ENCODE measurements at regions of chr14 and their contacts with region 1.

Region 1: DNA sequence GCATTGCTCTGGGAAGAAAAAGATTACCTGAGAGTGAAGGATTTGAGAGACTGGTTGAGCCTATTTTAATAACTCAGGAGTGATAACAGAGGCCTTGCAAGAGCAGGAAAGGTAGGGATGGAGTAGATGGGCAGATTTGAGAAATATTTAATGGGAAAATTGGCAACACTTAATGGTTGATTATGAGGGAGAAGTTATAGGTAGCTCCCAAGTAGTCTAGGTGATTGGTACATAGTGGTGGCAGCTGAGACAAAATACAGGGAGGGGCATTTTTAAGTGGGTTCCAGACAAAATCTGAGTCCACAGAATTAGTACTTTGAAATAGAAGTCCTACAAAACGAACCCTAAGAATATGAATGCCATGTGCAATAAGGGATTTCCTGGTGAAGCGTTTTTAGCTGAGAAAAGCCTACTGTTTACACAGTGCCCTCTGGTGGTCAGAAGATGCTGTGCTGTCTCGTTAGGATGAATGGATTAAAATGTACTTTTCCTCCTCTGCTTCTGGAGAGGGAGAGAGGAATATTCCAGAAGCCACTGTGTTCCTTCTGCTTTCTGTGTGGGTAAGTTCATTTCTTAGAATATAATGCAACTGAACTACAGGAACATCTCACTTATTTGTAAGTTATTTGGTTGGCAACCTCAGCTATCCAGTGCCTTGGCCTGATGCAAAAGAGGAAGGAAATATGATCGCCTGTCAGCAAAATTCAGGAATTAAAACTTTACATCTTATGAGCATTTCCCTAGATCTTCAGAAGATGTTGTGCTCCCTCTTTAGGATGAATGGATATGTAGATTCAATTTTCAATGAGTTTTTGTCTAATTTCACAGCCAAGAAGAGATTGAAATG is 6.5 kb downstream of the ZBTB1 start:
- DNase-seq: peak in 32 of 35 experiments; percentile 29 to 88 (median 56)
- ATAC-seq: peak; percentile 58 to 69 (median 64)
- H3K4me3 ChIP-seq: no peak overlapping the region
- H3K4me3 Mint-ChIP-seq: peak overlapping the region; percentile 15 to 49 (median 49)
- H3K27ac ChIP-seq: peak overlapping the region; percentile 15
- H3K27ac Mint-ChIP-seq: peak overlapping the region; percentile 80
- H3K4me1 ChIP-seq: peaks cover 49 to 51% of the 10 kb centered on the region in 2 experiments
- H3K4me1 Mint-ChIP-seq: peaks cover 88 to 92% (median 90%) of the 10 kb centered on the region in 3 donors
- H3K27me3 ChIP-seq: no peaks in the 10 kb centered on the region
- H3K27me3 Mint-ChIP-seq: no peaks in the 10 kb centered on the region

Region 2: DNA sequence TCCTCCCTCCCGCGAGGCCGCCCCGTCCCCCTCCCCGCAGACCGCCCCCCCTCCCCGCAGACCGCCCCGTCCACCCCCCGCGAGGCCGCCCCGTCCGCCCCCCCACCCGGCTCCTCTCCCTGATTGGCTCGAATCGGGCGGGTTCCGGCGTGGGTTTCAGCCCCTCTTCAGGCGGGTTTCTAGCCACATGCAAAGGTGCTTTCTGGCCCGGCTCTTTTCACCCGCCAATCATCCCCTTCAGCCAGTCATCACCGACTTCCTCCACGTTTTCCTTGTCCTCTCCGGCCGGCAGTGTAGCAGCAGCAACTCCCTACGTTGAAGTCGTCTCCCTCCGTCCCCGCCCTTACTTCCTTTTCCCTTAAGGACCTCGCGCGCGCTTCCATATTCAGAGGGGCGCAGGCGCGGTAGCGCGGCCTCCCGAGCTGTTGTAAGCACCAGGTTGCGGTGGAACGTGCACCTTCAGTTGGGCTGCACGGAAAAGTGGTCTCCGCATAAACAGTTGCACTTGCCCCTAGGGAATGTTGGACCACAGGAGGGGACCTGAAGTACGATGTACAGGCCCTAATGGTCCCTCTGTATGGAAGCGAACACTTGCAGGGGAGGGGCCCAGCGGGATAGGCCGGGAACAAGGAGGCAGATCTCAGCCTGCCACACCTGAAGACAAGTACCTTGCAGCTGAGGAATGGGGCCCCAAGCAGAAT is 172.3 kb before region 1 on chr14:
- CTCF ChIA-PET with region 1: interaction called in 1 of 2 experiments, 14 read pairs
- POLR2A ChIA-PET with region 1: interaction called in 1 of 2 experiments, 4 read pairs
- DNase-seq: peak; percentile 59 to 88 (median 75)
- ATAC-seq: peak; percentile 87 to 89 (median 88)
- H3K4me3 ChIP-seq: peak overlapping the region; percentile 66 to 83
- H3K4me3 Mint-ChIP-seq: peak overlapping the region; percentile 90
- H3K27ac ChIP-seq: peak overlapping the region; percentile 65
- H3K27ac Mint-ChIP-seq: peak overlapping the region; percentile 74 to 88
- H3K4me1 ChIP-seq: peaks cover 6 to 13% of the 10 kb centered on the region in 2 experiments
- H3K4me1 Mint-ChIP-seq: peaks cover 15 to 31% (median 20%) of the 10 kb centered on the region in 3 donors
- H3K27me3 ChIP-seq: no peaks in the 10 kb centered on the region
- H3K27me3 Mint-ChIP-seq: no peaks in the 10 kb centered on the region

Region 3: DNA sequence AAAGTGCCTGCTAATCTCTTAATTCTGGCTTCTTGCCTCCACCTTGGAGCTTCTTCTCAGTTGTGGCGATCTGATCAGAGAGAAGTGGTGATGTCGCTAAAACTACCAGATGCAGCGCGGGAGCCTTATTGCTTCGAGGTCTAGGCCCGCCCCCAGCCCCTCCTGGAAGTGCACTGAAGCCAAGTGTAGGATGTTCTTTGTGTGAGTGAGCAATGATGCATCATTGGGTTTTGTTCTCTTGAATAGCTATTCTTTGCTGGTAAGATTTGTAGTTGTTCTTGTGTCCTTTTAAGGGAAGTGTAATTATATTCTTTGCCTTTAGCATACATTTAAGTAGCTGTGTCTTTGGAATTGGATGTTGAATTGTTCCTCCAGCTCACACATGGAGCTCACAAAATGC is 87.1 kb before region 1 on chr14:
- CTCF ChIA-PET with region 1: interaction called in 1 of 2 experiments, 13 read pairs
- POLR2A ChIA-PET with region 1: interaction called in 1 of 2 experiments, 4 read pairs
- DNase-seq: no peak
- ATAC-seq: no peak
- H3K4me3 ChIP-seq: no peak overlapping the region
- H3K4me3 Mint-ChIP-seq: no peak overlapping the region
- H3K27ac ChIP-seq: no peak overlapping the region
- H3K27ac Mint-ChIP-seq: no peak overlapping the region
- H3K4me1 ChIP-seq: no peaks in the 10 kb centered on the region
- H3K4me1 Mint-ChIP-seq: no peaks in the 10 kb centered on the region
- H3K27me3 ChIP-seq: no peaks in the 10 kb centered on the region
- H3K27me3 Mint-ChIP-seq: no peaks in the 10 kb centered on the region

Region 4: DNA sequence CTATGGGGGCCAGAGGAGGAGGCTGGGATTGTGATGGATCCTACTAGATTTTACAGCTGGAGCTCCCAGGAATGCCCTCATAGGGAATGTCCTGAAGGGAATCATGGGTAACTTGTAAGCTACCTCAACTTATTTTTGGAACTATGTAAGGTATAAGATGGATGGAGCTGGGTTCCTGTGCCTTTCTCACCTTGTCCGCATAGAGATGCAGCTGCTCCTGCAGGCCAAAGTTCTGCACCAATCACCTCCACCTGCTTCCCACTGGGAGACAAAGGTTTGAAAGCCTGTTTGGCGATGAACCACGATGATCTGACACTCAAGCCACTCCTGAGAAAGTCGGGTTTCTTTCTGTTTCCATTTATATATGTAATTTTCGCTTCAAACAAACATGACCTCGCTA is 46.4 kb before region 1 on chr14:
- CTCF ChIA-PET with region 1: interaction called, 3 to 16 read pairs
- POLR2A ChIA-PET with region 1: interaction called, 3 to 4 read pairs
- DNase-seq: no peak
- ATAC-seq: no peak
- H3K4me3 ChIP-seq: peak overlapping the region; percentile 10 to 57
- H3K4me3 Mint-ChIP-seq: peak overlapping the region; percentile 75 to 87 (median 85)
- H3K27ac ChIP-seq: peak overlapping the region; percentile 15
- H3K27ac Mint-ChIP-seq: peak overlapping the region in 1 of 2 donors; percentile 46
- H3K4me1 ChIP-seq: peaks cover 3 to 17% of the 10 kb centered on the region in 2 experiments
- H3K4me1 Mint-ChIP-seq: peaks cover 37 to 48% (median 46%) of the 10 kb centered on the region in 3 donors
- H3K27me3 ChIP-seq: no peaks in the 10 kb centered on the region
- H3K27me3 Mint-ChIP-seq: no peaks in the 10 kb centered on the region

Region 5: DNA sequence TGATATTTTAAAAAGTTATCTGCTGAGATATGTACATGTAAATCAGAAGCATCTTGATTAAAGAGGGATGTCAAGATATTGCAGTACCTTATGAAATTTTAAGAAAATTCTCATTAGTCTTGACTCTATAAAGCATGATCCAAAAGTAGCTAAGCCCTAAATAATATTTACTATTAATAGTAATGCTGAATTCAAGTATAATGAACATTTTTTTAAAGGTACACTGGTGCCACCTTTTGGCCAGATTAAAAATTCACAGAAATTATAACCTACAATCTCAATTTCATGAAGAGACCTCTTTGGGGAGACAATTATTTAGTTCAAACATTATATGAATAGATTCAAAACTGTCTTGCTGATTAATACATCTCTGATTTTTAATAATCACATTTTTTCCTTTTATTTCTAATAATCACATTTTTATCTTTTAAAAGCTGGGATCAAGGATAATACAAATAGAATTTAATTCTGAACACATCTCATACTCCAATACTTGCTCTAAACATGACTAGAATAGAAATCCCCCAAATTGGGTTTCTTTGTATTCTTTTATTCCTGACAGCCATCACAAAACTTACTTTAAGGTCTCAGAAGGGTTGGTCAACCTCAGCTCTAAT is 32.3 kb before region 1 on chr14:
- CTCF ChIA-PET with region 1: interaction called, 7 to 11 read pairs
- POLR2A ChIA-PET with region 1: interaction called, 5 to 14 read pairs
- DNase-seq: peak in 1 of 35 experiments; percentile 65
- ATAC-seq: peak in 1 of 4 experiments; percentile 26
- H3K4me3 ChIP-seq: no peak overlapping the region
- H3K4me3 Mint-ChIP-seq: no peak overlapping the region
- H3K27ac ChIP-seq: no peak overlapping the region
- H3K27ac Mint-ChIP-seq: no peak overlapping the region
- H3K4me1 ChIP-seq: peaks cover 0 to 2% of the 10 kb centered on the region in 2 experiments
- H3K4me1 Mint-ChIP-seq: peaks cover 7 to 23% (median 21%) of the 10 kb centered on the region in 3 donors
- H3K27me3 ChIP-seq: no peaks in the 10 kb centered on the region
- H3K27me3 Mint-ChIP-seq: no peaks in the 10 kb centered on the region

Region 6: GRCh38 chr14:64491637-64492036 is 19.4 kb before region 1 on chr14:
- CTCF ChIA-PET with region 1: interaction called, 6 to 18 read pairs
- POLR2A ChIA-PET with region 1: interaction called, 3 to 13 read pairs
- DNase-seq: no peak
- ATAC-seq: no peak
- H3K4me3 ChIP-seq: no peak overlapping the region
- H3K4me3 Mint-ChIP-seq: no peak overlapping the region
- H3K27ac ChIP-seq: peak overlapping the region; percentile 3
- H3K27ac Mint-ChIP-seq: peak overlapping the region in 1 of 2 donors; percentile 30
- H3K4me1 ChIP-seq: peaks cover 20% of the 10 kb centered on the region in 2 experiments
- H3K4me1 Mint-ChIP-seq: peaks cover 64 to 68% (median 66%) of the 10 kb centered on the region in 3 donors
- H3K27me3 ChIP-seq: no peaks in the 10 kb centered on the region
- H3K27me3 Mint-ChIP-seq: no peaks in the 10 kb centered on the region

Region 7: GRCh38 chr14:64496764-64497163 is 14.3 kb before region 1 on chr14:
- CTCF ChIA-PET with region 1: interaction called, 6 to 28 read pairs
- POLR2A ChIA-PET with region 1: interaction called in 1 of 2 experiments, 7 read pairs
- DNase-seq: no peak
- ATAC-seq: peak in 2 of 4 experiments; percentile 30 to 42
- H3K4me3 ChIP-seq: no peak overlapping the region
- H3K4me3 Mint-ChIP-seq: peak overlapping the region; percentile 11 to 53 (median 13)
- H3K27ac ChIP-seq: peak overlapping the region; percentile 24
- H3K27ac Mint-ChIP-seq: peak overlapping the region; percentile 72 to 79
- H3K4me1 ChIP-seq: peaks cover 36 to 51% of the 10 kb centered on the region in 2 experiments
- H3K4me1 Mint-ChIP-seq: peaks cover 81 to 89% (median 81%) of the 10 kb centered on the region in 3 donors
- H3K27me3 ChIP-seq: no peaks in the 10 kb centered on the region
- H3K27me3 Mint-ChIP-seq: no peaks in the 10 kb centered on the region

Measured in T-cell (primary cell).